ENCODE measurements at regions of chr2 and their contacts with region 1.

Region 1: DNA sequence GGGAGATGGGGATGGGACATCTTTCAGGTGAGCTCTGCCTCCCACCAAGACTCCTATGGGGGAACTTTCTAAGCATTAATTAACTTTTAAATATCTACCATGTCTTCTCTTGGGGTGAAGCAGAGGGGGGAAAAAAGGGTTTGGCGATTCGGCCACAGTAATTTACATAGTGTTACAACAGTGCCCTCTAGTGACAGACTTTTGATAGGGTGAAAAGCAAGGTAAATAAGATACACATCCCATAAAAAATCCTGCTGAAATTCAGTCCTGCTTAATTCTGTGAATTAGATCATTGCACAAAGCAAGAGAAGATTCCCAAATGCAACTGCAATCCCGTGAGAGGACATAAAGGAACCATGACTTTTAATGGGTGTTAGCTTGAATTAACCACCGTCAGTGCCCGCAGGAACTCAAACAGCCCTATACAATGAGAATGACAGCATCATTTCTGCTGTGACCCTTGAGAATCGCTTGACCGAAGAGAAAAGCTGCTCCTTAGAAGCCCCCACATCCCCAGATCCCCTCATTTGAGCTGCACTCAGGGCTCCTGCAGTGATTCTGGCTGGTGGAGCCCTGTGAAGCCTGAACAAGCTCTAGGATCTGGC is 32.8 kb downstream of the FAM124B start:
- DNase-seq: no peak
- ATAC-seq: no peak

Region 2: DNA sequence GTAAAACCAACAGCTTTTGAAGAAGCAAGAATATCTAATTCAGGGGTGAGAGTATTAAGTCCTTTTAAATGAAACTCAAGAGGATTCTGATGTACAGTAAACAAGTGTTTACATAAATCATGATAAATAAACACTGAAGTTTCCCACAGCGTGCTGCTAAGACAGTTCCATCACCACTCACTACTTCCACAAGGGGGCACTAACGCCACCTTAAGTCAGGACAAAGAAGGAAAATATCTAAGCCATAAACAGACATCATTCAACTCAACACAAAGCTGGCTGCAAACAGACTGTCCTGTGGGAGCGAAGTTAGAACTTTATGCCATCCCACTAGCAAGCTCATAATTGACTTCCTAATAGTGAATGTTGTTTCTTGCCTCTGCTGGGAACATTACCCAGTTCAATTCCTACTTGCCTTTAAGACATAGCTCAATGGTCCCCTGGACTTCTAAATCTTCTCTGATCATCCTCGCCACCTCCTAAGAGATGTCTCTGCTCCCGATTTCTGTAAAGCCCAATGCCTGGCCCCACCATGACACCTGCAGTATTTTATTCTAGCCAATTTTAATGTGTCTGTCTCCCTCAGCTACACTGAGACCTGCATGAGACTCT is 375.4 kb before region 1 on chr2:
- intact Hi-C with region 1: loop called in 1 of 2 experiments (anchors 10 kb)
- DNase-seq: peak; percentile 60
- ATAC-seq: peak; percentile 62 to 74

Region 3: DNA sequence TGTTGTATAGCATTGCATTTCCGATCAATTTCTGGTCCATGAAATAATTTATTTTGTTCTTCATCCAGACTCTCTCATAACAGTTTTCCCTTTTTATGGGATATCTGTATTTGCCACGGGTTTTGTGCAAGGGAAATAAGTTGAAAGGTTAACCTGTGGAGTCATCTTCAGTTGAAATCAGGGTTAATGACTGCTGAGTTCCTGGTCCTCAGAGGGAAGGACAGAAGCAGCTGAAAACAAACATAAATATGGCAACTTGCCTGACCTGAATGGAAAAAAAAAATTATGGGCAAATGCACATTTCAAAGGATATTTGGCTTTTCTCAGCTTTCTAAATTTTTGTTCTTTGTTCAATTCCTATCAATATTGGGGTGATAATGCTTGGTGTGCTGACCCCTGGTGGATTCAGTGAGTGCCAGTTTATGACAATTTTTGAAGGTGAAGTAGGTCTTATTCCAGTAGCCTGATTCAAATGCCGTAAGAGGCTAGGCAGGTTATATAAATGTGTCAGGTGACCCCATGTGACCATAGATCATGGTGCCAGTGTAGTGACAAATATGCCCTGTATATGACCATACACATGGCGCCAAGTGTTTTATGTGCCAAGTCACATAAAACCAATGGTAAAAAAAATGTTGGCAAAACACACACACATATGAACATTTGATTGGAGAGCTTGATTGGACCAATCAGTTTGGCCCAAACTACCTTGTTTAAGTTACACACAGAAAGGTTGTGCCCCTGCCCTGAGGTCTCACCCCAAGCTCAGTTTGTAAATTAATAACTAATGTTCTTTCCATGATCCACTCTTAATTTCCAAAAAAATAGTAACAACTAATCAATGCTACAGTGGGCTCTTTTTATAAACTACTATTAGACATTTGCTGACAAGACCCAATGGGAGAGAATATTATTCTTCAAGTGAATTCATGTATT is 80.3 kb after region 1 on chr2:
- intact Hi-C with region 1: loop called (anchors 5 to 10 kb)
- DNase-seq: no peak
- ATAC-seq: no peak

Region 4: DNA sequence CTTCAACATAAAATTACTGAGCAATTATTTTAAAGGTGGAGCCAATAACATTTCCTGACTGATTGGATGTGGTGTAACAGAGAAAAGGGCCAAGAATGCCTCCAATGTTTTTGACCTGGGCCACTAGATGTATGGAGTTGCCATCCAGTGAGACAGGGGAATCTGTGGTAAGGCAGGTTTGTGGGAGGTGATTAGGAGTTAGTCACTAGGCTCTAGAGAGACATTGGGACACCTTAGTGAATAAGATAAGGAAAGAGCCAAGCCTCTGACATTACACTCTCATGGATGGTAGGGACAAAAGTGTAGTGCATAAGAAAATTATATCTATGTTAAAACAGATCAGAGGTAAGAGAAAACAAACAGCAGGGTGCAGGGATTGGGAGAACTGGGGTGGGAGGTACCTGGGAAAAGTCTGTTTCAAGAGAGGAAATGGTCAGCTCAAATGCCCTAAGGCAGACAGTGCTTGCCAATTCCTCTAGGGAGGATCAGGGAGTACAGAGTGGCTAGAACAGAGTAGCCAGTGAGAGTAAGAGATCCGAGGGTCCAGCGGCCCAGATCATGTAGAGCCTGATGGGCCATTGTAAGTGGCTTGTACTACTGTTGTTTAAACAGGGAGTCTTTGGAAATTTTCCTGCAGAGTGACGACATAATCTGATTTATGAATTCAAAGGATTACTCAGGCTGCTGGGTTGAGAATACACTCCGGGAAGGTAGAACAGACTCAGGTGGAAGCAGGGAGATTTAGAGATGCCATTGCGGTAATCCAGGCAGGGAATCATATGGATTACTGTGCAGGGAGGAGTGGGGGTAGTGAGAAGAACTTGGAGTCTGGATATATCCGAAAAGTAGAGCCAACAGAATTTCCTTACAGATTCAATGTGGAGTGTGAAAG is 261.8 kb after region 1 on chr2:
- intact Hi-C with region 1: no loop called
- DNase-seq: no peak
- ATAC-seq: no peak

Measured in left cardiac atrium (tissue), 4 donors.